ENCODE measurements at regions of chrX and their contacts with region 1.

Region 1: GRCh38 chrX:102651242-102652011 is at the start of gene GPRASP1:
- DNase-seq: peak; percentile 55
- H3K4me3 ChIP-seq: peak within 1 kb of the TSS; percentile 53 to 56
- H3K27ac ChIP-seq: peak within 1 kb of the TSS; percentile 71 to 82
- H3K4me1 ChIP-seq: no peaks in the 10 kb centered on the region
- H3K27me3 ChIP-seq: no peaks in the 10 kb centered on the region
- CTCF ChIP-seq: no peak
- POLR2A ChIP-seq: peak; percentile 22
- total RNA-seq, gene GPRASP1: 8.9 to 15.8 TPM

Region 2: DNA sequence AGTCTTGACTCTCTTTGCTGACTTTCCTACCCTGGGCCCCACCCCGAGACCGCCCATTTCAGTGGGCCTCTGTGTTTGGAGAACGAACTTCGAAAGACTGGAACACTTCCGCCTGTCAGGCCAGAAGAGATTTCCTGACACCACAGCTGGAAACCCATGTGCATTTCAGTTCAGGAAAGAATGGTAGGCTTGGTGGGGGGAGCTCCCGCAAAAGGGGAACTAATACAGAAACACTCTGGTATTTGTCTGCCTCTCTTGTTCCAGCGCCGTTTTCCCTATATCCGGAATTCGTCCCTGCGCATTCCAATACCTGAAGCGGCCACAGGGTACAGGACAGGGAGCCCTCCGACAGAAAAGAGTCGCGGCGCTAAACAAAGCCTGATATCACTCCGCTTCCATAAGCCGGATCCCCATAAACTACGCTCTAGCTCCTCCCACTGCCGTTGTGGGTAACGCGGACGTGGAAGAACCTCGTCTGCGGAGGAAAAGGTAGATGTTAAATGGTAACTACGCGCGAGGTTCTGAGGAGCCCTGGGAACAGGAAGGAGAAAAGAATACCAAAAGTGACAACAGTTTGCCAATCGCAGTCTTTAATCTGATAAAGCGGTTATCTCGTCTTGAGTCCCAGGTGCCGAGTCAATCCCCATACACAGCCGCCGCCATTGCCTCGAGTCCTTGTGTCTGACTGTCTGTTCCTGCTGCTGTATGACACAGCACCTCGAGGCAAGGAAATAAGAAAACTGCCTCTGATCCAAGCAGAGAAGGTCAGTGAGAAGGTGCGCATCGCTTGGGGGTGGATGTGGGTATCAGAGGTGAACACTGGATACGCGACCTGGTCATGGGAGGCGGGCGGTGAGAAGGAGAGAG is 52.1 kb before region 1 on chrX and contains the start of gene ARMCX5:
- intact Hi-C with region 1: loop called (anchors 2 kb)
- DNase-seq: peak; percentile 63
- H3K4me3 ChIP-seq: peak within 1 kb of the TSS; percentile 40 to 41
- H3K27ac ChIP-seq: peak within 1 kb of the TSS; percentile 76 to 80
- H3K4me1 ChIP-seq: no peaks in the 10 kb centered on the region
- H3K27me3 ChIP-seq: no peaks in the 10 kb centered on the region
- CTCF ChIP-seq: peak in 2 of 4 experiments; percentile 19 to 35
- POLR2A ChIP-seq: no peak
- total RNA-seq, gene ARMCX5: 18.6 to 32.7 TPM

Region 3: DNA sequence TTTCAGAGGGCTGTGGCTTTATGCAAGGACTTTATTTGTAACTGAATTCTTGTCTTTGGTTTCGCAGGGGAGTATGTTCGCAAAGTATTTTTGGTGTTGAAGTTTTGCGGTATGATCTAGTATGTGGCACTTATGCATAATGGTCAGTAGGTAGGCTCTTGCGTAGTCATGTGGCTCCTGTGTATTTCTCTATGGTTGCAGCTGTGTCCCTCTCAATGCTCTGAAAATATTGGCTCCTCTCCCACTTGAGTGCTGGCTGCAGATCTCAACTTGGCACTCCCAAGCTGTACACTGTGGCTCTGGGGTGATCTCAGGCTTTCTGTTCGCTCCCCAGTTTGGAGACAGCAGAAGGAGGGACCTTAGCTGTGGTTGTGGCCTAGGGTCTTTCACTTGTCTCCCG is 27.3 kb before region 1 on chrX:
- intact Hi-C with region 1: no loop called
- DNase-seq: no peak
- H3K4me3 ChIP-seq: no peak overlapping the region
- H3K27ac ChIP-seq: no peak overlapping the region
- H3K4me1 ChIP-seq: no peaks in the 10 kb centered on the region
- H3K27me3 ChIP-seq: no peaks in the 10 kb centered on the region
- CTCF ChIP-seq: no peak
- POLR2A ChIP-seq: no peak

Region 4: DNA sequence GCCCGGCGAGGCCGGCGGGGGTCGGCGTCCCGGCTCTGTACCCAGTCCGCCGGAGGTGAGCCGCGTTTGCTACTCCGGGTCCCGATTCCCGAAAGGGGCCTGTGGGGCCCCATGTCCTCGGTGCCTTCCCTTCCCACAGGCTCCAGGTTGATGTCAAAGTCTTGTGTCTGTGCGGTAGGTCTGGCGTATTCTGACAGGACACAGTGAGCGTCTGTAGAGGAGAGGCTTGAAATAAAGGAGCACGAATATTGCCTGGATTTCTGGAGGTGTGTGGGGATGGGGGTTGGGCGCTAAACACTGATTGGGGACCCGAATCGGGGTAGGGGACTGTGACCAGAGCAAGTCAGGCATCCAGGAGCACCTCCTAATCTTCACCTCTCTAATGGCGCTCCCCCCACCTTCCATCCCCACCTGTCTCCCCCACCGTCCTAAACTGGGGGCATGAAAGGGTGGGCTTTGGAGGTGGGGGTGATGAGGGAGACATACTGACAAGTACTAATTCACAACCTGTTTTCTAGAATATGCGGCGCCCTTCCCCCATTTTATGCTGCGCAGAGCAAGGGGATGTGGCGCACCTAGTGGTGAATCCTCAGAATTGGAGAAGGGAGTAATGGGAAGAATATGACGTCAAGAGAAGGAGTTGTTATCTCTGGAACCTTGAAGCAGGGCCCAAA is 61.7 kb after region 1 on chrX:
- intact Hi-C with region 1: loop called (anchors 2 kb)
- DNase-seq: peak; percentile 60
- H3K4me3 ChIP-seq: peak overlapping the region; percentile 49 to 55
- H3K27ac ChIP-seq: peak overlapping the region; percentile 88 to 90
- H3K4me1 ChIP-seq: no peaks in the 10 kb centered on the region
- H3K27me3 ChIP-seq: no peaks in the 10 kb centered on the region
- CTCF ChIP-seq: peak; percentile 42 to 76 (median 57)
- POLR2A ChIP-seq: no peak

Measured in prostate gland (tissue), 2 donors.